ENCODE measurements at regions of chr3 and their contacts with region 1.

Region 1: GRCh38 chr3:126357295-126358037 is at the start of gene KLF15:
- DNase-seq: peak; percentile 93
- H3K4me3 Mint-ChIP-seq: peak within 1 kb of the TSS; percentile 98
- H3K27ac Mint-ChIP-seq: peak within 1 kb of the TSS; percentile 72
- H3K4me1 Mint-ChIP-seq: peaks cover 24% of the 10 kb centered on the region
- H3K27me3 Mint-ChIP-seq: peaks cover 50% of the 10 kb centered on the region
- CTCF ChIP-seq: no peak
- total RNA-seq, gene KLF15: 8.2 and 10.6 TPM in 2 replicates

Region 2: GRCh38 chr3:126212602-126213378 is 144.7 kb before region 1 on chr3:
- CTCF ChIA-PET with region 1: no interaction called
- intact Hi-C with region 1: loop called (anchors 5 kb)
- DNase-seq: peak; percentile 74
- H3K4me3 Mint-ChIP-seq: peak overlapping the region; percentile 66
- H3K27ac Mint-ChIP-seq: peak overlapping the region; percentile 52
- H3K4me1 Mint-ChIP-seq: peaks cover 55% of the 10 kb centered on the region
- H3K27me3 Mint-ChIP-seq: no peaks in the 10 kb centered on the region
- CTCF ChIP-seq: peak; percentile 46

Region 3: DNA sequence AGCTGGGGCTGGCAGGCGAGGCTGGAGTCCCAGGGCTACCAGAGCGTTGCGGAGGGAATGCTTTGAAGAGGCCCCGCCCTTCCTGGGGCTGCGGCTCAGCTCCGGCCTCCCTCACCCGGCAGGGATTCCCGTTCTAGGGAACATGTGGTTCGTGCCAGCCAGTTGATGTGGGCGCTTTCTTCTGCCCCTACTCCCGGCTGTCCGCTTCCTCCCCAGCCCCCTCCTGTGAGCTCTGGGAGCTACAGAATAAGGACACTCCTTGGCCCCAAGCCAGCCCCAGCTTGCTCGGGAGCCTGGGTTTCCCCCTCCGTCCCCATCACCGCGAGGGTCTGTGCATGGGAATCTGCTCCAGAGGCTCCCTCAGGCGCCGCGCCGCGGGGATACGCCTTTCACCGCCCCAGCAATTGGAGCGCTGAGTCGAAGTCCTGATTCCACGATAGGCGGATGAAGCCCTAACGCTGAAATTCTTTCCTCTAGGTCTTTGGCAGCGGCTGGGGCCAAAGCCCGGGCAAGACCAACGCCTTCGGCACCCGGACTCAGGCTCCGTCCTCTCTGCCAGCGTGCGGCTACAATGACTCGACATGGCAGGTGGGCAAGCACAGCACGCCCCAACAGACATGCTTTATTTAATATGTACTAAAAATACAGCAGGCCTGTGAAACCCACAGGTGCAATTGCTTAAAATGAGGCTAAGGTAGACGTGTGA is 69.8 kb before region 1 on chr3:
- CTCF ChIA-PET with region 1: interaction called, 11 read pairs
- intact Hi-C with region 1: loop called (anchors 5 kb)
- DNase-seq: peak; percentile 79
- H3K4me3 Mint-ChIP-seq: peak overlapping the region; percentile 69
- H3K27ac Mint-ChIP-seq: no peak overlapping the region
- H3K4me1 Mint-ChIP-seq: no peaks in the 10 kb centered on the region
- H3K27me3 Mint-ChIP-seq: peaks cover 49% of the 10 kb centered on the region
- CTCF ChIP-seq: no peak

Region 4: GRCh38 chr3:126329927-126330725 is 27.3 kb before region 1 on chr3:
- CTCF ChIA-PET with region 1: no interaction called
- intact Hi-C with region 1: no loop called
- DNase-seq: no peak
- H3K4me3 Mint-ChIP-seq: no peak overlapping the region
- H3K27ac Mint-ChIP-seq: no peak overlapping the region
- H3K4me1 Mint-ChIP-seq: no peaks in the 10 kb centered on the region
- H3K27me3 Mint-ChIP-seq: peaks cover 49% of the 10 kb centered on the region
- CTCF ChIP-seq: no peak

Region 5: GRCh38 chr3:126378341-126378751 is 20.9 kb after region 1 on chr3:
- CTCF ChIA-PET with region 1: interaction called, 10 read pairs
- intact Hi-C with region 1: no loop called
- DNase-seq: no peak
- H3K4me3 Mint-ChIP-seq: no peak overlapping the region
- H3K27ac Mint-ChIP-seq: no peak overlapping the region
- H3K4me1 Mint-ChIP-seq: no peaks in the 10 kb centered on the region
- H3K27me3 Mint-ChIP-seq: peaks cover 74% of the 10 kb centered on the region
- CTCF ChIP-seq: no peak

Region 6: GRCh38 chr3:126389112-126389793 is 31.8 kb after region 1 on chr3:
- CTCF ChIA-PET with region 1: interaction called, 15 read pairs
- intact Hi-C with region 1: loop called (anchors 1 kb)
- DNase-seq: peak; percentile 96
- H3K4me3 Mint-ChIP-seq: peak overlapping the region; percentile 71
- H3K27ac Mint-ChIP-seq: peak overlapping the region; percentile 90
- H3K4me1 Mint-ChIP-seq: peaks cover 18% of the 10 kb centered on the region
- H3K27me3 Mint-ChIP-seq: peaks cover 48% of the 10 kb centered on the region
- CTCF ChIP-seq: peak; percentile 98